ENCODE measurements at regions of chr6 and their contacts with region 1.

Region 1: DNA sequence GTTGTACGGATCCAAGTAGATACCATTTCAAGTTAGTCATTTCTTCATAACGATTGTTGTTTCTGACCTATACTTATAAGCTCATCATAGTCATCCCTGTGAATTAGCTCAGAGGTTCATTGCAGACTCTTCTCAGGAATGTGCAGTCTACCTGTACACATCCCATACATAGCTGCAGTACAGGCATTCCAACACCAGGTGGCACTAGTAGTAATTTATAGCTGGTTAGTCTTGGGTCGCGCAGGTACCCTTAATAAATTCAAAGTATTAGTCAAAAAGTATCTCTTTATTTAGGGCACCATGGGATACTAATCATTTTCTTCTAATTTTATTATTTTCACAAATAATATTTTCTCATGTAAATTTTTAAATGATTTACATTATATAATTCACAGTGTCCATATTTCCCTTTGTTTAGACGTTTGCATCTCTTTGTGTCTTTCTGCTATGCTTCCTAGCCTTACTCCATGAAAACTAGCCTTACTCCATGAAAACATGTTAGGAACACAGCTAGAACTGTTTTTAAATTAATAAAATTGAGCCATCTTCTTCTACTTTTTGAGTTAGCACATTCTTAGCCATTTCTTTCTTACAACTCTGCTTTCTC is 128.6 kb upstream of the FAM83B start:
- DNase-seq: no peak
- H3K4me3 ChIP-seq: no peak overlapping the region
- H3K27ac ChIP-seq: no peak overlapping the region
- H3K4me1 ChIP-seq: no peaks in the 10 kb centered on the region
- H3K27me3 ChIP-seq: no peaks in the 10 kb centered on the region
- CTCF ChIP-seq: peak; percentile 69 to 83 (median 73)
- EP300 ChIP-seq: no peak
- POLR2A ChIP-seq: no peak

Region 2: GRCh38 chr6:53159558-53159957 is 1558.4 kb before region 1 on chr6:
- intact Hi-C with region 1: no loop called
- DNase-seq: no peak
- H3K4me3 ChIP-seq: no peak overlapping the region
- H3K27ac ChIP-seq: peak overlapping the region in 1 of 4 donors; percentile 32
- H3K4me1 ChIP-seq: peaks cover 0 to 34% (median 20%) of the 10 kb centered on the region in 4 donors
- H3K27me3 ChIP-seq: no peaks in the 10 kb centered on the region
- CTCF ChIP-seq: no peak
- EP300 ChIP-seq: no peak
- POLR2A ChIP-seq: no peak

Region 3: DNA sequence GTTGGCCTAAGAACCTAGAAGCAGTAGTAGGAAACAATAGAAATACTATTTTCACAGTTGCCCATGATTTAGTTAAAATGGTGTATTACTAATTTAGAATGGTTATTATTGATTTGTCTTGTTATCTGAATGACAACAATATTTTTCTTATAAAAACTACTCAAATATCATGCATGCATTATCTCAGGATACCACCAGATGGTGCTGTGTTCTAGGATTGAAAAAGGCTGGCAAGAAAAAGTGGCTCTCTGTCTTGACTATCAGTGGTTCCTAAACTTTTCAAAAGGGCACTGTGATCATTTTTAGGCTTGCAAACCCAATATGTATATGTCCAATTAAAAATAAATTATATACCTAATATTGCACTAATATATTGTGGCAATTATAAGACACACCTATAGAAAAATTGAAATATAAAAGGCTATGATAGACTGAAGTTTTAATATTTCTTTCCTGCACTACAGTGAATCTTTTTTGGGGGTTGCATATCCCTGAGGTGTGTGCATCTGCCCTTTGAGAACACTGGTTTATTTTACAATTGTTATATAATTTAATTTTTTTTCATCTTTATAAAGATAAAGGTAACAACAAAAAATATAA is 738.4 kb before region 1 on chr6:
- intact Hi-C with region 1: loop called (anchors 5 kb)
- DNase-seq: no peak
- H3K4me3 ChIP-seq: no peak overlapping the region
- H3K27ac ChIP-seq: no peak overlapping the region
- H3K4me1 ChIP-seq: no peaks in the 10 kb centered on the region
- H3K27me3 ChIP-seq: no peaks in the 10 kb centered on the region
- CTCF ChIP-seq: peak; percentile 72 to 84 (median 84)
- EP300 ChIP-seq: no peak
- POLR2A ChIP-seq: no peak

Region 4: GRCh38 chr6:54665278-54665677 is 52.7 kb before region 1 on chr6:
- intact Hi-C with region 1: no loop called
- DNase-seq: no peak
- H3K4me3 ChIP-seq: no peak overlapping the region
- H3K27ac ChIP-seq: no peak overlapping the region
- H3K4me1 ChIP-seq: no peaks in the 10 kb centered on the region
- H3K27me3 ChIP-seq: no peaks in the 10 kb centered on the region
- CTCF ChIP-seq: no peak
- EP300 ChIP-seq: no peak
- POLR2A ChIP-seq: no peak

Region 5: DNA sequence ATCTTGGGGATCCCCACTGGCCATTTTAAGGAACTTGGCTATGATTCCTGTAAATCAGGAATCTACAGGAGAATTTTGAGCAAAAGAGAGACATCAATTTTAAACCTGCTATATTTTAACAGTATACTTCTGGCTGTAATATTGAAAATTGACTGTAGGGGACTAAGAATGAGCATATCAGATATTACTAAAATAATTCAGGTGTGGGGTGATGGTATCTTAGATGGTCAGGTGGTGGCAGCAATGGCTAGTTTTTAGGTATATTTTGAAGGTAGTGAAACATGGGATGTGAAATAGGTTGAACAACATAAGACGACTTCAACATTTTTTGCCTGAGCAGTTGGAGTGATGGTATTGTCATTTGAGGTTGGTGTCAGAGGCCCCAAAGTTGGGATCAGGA is 160.7 kb after region 1 on chr6:
- intact Hi-C with region 1: no loop called
- DNase-seq: no peak
- H3K4me3 ChIP-seq: no peak overlapping the region
- H3K27ac ChIP-seq: no peak overlapping the region
- H3K4me1 ChIP-seq: no peaks in the 10 kb centered on the region
- H3K27me3 ChIP-seq: no peaks in the 10 kb centered on the region
- CTCF ChIP-seq: no peak
- EP300 ChIP-seq: no peak
- POLR2A ChIP-seq: no peak

Region 6: GRCh38 chr6:55069132-55069781 is 351.3 kb after region 1 on chr6:
- intact Hi-C with region 1: loop called (anchors 5 kb)
- DNase-seq: no peak
- H3K4me3 ChIP-seq: no peak overlapping the region
- H3K27ac ChIP-seq: no peak overlapping the region
- H3K4me1 ChIP-seq: no peaks in the 10 kb centered on the region
- H3K27me3 ChIP-seq: no peaks in the 10 kb centered on the region
- CTCF ChIP-seq: peak; percentile 41 to 50 (median 42)
- EP300 ChIP-seq: no peak
- POLR2A ChIP-seq: no peak